Panc1 (cell line): ENCODE measurements at regions of chr15 and their contacts with region 1.

Region 1: DNA sequence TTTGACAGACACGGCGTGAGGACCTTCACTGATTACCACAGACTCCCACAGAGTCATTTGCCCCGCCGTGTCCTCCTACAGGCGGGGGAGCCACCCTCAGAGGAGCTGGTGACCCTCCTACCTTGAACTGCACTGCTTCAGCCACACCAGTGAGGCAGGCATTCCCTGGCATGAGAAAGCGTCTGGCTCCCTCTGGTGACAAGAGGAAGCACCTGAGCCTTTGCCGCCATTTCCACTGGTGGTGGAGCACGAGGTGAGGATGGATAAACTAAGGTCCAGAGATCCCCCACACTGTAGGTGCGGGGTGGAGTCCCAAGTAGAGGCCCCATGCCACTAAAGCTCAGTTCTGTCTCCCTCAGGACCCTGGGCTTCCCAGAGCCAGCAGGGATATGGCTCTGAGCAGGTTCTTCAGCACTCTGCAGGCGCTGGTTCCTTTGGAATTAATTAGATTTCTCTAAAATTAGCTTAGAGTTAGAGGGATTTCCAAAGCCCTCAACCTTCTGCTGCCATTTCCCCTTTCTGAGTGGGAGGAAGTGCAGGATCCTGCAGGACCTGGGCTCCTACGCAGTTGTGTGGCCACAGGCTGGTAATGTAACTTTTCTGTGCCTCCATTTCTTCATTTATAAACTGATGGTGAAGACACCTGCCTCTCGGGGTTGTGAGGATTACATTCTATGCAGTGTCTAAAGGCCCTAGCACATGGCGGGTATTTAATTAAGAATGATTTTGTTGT is 224.0 kb downstream of the SLCO3A1 start:
- DNase-seq: no peak
- ATAC-seq: peak; percentile 92
- H3K4me3 ChIP-seq: no peak overlapping the region
- H3K27ac ChIP-seq: no peak overlapping the region
- H3K4me1 ChIP-seq: no peaks in the 10 kb centered on the region
- H3K27me3 ChIP-seq: no peaks in the 10 kb centered on the region
- CTCF ChIP-seq: peak; percentile 89

Region 2: GRCh38 chr15:91302588-91303439 is 774.7 kb before region 1 on chr15:
- CTCF ChIA-PET with region 1: no interaction called
- POLR2A ChIA-PET with region 1: no interaction called
- in situ Hi-C with region 1: no loop called
- intact Hi-C with region 1: loop called (anchors 2 kb)
- DNase-seq: peak; percentile 43
- ATAC-seq: peak; percentile 89
- H3K4me3 ChIP-seq: no peak overlapping the region; a peak in 1 of 4 replicates
- H3K27ac ChIP-seq: no peak overlapping the region
- H3K4me1 ChIP-seq: no peaks in the 10 kb centered on the region
- H3K27me3 ChIP-seq: peaks cover 41% of the 10 kb centered on the region
- CTCF ChIP-seq: peak; percentile 85

Region 3: DNA sequence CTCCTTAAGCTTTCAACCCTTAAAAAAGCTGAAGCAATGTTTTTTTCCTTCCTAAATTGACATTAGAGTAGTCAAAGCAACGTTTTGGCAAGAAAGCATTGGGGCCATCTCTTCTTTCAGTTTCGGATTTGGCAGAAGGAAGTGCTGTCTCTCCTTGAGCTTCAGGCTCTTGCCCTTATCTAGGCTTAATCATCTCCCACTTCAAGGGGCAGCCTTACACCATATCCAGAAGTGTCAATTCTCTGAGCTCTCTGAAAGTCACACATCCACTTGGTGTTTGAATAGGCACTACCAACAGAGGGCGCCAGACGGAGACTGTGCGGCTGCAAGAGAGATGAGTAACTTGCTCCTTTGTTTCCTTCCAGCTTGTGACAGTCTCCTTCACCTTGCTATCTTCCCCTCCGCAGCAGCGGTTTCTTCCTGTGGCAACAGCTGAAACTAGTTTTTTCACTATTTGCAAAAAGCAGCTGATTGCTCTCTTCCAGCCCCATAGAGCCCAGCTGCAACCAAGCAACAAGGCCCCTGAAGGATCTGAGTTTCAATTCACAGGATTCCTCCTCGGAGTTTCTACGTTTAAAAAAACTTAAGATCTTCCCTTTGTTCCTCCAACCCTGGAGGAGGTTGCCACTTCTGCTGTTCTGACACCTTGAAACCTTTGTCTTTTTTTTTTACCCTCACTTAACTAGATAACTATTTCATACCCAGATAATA is 371.0 kb before region 1 on chr15:
- CTCF ChIA-PET with region 1: no interaction called
- POLR2A ChIA-PET with region 1: no interaction called
- in situ Hi-C with region 1: no loop called
- intact Hi-C with region 1: loop called (anchors 10 kb)
- DNase-seq: peak; percentile 12
- ATAC-seq: peak; percentile 78
- H3K4me3 ChIP-seq: no peak overlapping the region
- H3K27ac ChIP-seq: no peak overlapping the region
- H3K4me1 ChIP-seq: no peaks in the 10 kb centered on the region
- H3K27me3 ChIP-seq: no peaks in the 10 kb centered on the region; the same call in 1 of the 2 replicates
- CTCF ChIP-seq: peak; percentile 90

Region 4: DNA sequence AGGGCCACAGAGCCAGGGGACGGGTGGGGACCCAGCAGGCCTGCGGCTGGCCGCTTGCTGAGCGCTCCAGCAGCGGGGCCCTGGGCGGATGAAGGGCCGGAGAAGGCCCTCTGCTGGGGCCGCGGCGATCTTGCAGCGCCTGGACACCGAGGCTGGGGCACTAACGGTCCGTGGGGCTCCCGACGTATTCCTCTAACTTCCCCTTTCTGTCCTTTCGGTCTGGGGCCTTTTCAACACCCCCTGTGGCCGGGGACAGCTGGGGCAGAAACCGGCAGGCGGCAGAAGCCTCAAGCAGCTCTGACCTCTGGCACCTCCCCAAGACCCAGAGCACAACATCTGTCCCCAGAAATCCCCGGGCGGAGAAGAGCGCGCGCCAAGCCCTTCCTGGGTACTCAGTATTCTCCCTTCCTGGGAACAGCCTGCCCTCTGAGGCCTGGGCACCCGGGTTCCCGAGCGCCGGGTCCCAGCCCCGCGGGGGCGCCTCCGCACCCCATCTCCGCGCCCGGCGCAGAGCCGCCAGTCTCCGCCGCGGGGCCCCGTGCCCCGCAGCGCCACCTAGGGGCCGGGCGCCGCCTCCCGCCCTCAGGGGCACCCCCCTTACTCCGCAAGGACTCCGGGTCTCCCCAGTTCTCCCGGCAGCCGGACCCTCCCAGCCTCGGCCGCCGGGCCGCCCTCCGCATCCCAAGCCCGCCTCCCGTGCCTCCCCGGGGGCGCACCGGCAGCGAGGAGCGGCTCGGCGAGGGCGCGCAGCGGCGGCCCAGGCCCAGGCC is 224.6 kb before region 1 on chr15:
- CTCF ChIA-PET with region 1: interaction called, 5 read pairs
- POLR2A ChIA-PET with region 1: no interaction called
- in situ Hi-C with region 1: no loop called
- intact Hi-C with region 1: loop called (anchors 2 kb)
- DNase-seq: no peak
- ATAC-seq: peak; percentile 88
- H3K4me3 ChIP-seq: peak overlapping the region; percentile 64 to 66
- H3K27ac ChIP-seq: peak overlapping the region; percentile 63
- H3K4me1 ChIP-seq: peaks cover 18% of the 10 kb centered on the region
- H3K27me3 ChIP-seq: no peaks in the 10 kb centered on the region
- CTCF ChIP-seq: peak; percentile 97

Region 5: GRCh38 chr15:91942676-91943576 is 134.6 kb before region 1 on chr15:
- CTCF ChIA-PET with region 1: interaction called, 3 read pairs
- POLR2A ChIA-PET with region 1: no interaction called
- in situ Hi-C with region 1: no loop called
- intact Hi-C with region 1: loop called (anchors 10 kb)
- DNase-seq: no peak
- ATAC-seq: no peak
- H3K4me3 ChIP-seq: no peak overlapping the region
- H3K27ac ChIP-seq: peak overlapping the region; percentile 26; the same call in 1 of the 2 replicates
- H3K4me1 ChIP-seq: peaks cover 34% of the 10 kb centered on the region
- H3K27me3 ChIP-seq: no peaks in the 10 kb centered on the region
- CTCF ChIP-seq: no peak

Region 6: GRCh38 chr15:92091155-92091734 is 13.7 kb after region 1 on chr15:
- CTCF ChIA-PET with region 1: no interaction called
- POLR2A ChIA-PET with region 1: no interaction called
- in situ Hi-C with region 1: no loop called
- intact Hi-C with region 1: no loop called
- DNase-seq: no peak
- ATAC-seq: peak; percentile 92
- H3K4me3 ChIP-seq: no peak overlapping the region
- H3K27ac ChIP-seq: no peak overlapping the region
- H3K4me1 ChIP-seq: no peaks in the 10 kb centered on the region
- H3K27me3 ChIP-seq: no peaks in the 10 kb centered on the region
- CTCF ChIP-seq: peak; percentile 94